ENCODE measurements at regions of chr5 and their contacts with region 1.

Region 1: DNA sequence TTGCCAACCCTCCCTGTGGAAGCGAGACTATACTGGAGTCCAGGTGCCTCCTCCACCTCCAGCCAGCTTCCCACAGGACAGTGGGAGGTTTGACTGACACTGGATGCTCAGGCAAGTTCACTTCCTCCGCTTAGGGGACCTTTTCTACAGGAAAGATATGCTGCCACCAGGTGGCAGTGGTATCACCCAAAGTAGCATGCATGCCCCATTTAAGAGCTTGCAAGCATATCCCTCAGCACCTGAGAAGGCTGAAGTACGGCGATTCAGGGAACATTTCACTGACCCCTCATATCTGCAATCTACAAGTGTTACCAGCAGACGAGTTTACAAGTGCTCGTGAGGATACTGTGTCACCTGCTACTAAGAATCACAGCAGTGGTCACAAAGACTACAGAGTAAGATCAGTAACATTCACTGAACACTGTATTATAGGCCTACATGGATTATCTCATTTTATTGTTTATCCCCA is 75.5 kb downstream of the KLHL3 start:
- DNase-seq: no peak
- H3K4me3 ChIP-seq: no peak overlapping the region
- H3K27ac ChIP-seq: no peak overlapping the region
- H3K4me1 ChIP-seq: peaks cover 0 to 8% (median 3%) of the 10 kb centered on the region in 6 donors
- H3K27me3 ChIP-seq: no peaks in the 10 kb centered on the region
- CTCF ChIP-seq: peak; percentile 37 to 83 (median 74)
- POLR2A ChIP-seq: no peak

Region 2: DNA sequence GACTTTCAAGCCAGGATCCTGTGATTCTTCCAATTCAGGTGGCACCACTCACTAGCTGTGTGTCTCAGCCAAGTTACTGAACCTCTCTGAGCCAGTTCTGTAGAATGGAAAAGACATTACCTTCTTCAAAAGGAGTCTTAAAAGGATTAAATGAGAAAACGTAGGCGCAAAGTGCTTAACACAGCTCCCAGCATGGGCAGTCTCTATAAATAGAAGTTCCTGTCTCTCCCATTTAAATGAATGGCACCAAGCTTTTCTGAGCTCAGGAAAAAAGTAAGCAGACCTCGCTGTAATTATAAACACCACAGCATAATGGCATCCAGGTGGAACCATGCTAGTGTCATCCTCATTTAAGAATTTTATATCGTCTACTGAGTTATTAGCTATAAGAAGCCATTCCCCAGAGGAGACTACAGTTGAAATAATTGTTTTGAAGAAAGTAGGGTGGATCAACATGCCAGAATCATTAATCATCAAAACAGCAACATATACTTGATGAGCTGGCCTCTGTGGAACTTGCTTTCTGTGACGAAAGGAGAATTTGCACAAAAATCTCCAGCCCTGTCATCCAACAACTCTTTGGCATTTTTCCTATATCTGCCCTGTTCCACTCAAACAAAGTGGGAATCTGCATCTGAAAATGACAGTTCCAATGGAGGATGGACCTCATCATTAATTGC is 350.2 kb before region 1 on chr5:
- intact Hi-C with region 1: no loop called
- DNase-seq: no peak
- H3K4me3 ChIP-seq: no peak overlapping the region
- H3K27ac ChIP-seq: no peak overlapping the region
- H3K4me1 ChIP-seq: no peaks in the 10 kb centered on the region
- H3K27me3 ChIP-seq: peaks cover 0 to 2% (median 0%) of the 10 kb centered on the region in 7 donors
- CTCF ChIP-seq: no peak
- POLR2A ChIP-seq: no peak

Region 3: GRCh38 chr5:137735555-137736284 is 75.3 kb after region 1 on chr5 and contains the start of gene KLHL3:
- intact Hi-C with region 1: loop called (anchors 2 kb)
- DNase-seq: peak; percentile 76
- H3K4me3 ChIP-seq: peak within 1 kb of the TSS; percentile 11 to 65 (median 36)
- H3K27ac ChIP-seq: peak within 1 kb of the TSS; percentile 28 to 74 (median 54)
- H3K4me1 ChIP-seq: peaks cover 17 to 46% (median 37%) of the 10 kb centered on the region in 6 donors
- H3K27me3 ChIP-seq: peaks cover 0 to 3% (median 0%) of the 10 kb centered on the region in 7 donors
- CTCF ChIP-seq: no peak
- POLR2A ChIP-seq: no peak
- total RNA-seq, gene KLHL3: 7.4 to 17.9 (median 11.7) TPM

Region 4: GRCh38 chr5:137743031-137743640 is 82.8 kb after region 1 on chr5:
- intact Hi-C with region 1: loop called (anchors 2 kb)
- DNase-seq: no peak
- H3K4me3 ChIP-seq: no peak overlapping the region
- H3K27ac ChIP-seq: no peak overlapping the region
- H3K4me1 ChIP-seq: peaks cover 0 to 15% (median 0%) of the 10 kb centered on the region in 6 donors
- H3K27me3 ChIP-seq: no peaks in the 10 kb centered on the region
- CTCF ChIP-seq: peak; percentile 29 to 72 (median 57)
- POLR2A ChIP-seq: no peak